Mammary epithelial cell (primary cell): ENCODE measurements at regions of chr3 and their contacts with region 1.

Region 1: GRCh38 chr3:30557746-30558303 is 48.6 kb upstream of the TGFBR2 start:
- DNase-seq: no peak
- H3K4me3 ChIP-seq: no peak overlapping the region
- H3K27ac ChIP-seq: no peak overlapping the region
- H3K4me1 ChIP-seq: peaks cover 12% of the 10 kb centered on the region
- H3K27me3 ChIP-seq: no peaks in the 10 kb centered on the region
- CTCF ChIP-seq: no peak

Region 2: GRCh38 chr3:30894538-30895251 is 336.9 kb after region 1 on chr3 and contains the start of gene GADL1:
- CTCF ChIA-PET with region 1: no interaction called
- dilution Hi-C with region 1: no loop called
- in situ Hi-C with region 1: no loop called
- intact Hi-C with region 1: loop called (anchors 5 kb)
- DNase-seq: peak; percentile 14
- H3K4me3 ChIP-seq: peak within 1 kb of the TSS; percentile 48 to 54 (median 53)
- H3K27ac ChIP-seq: no peak within 1 kb of the TSS
- H3K4me1 ChIP-seq: peaks cover 4% of the 10 kb centered on the region
- H3K27me3 ChIP-seq: peaks cover 30% of the 10 kb centered on the region
- CTCF ChIP-seq: no peak
- total RNA-seq, gene GADL1: not detected